ENCODE measurements at regions of chr3 and their contacts with region 1.

Region 1: DNA sequence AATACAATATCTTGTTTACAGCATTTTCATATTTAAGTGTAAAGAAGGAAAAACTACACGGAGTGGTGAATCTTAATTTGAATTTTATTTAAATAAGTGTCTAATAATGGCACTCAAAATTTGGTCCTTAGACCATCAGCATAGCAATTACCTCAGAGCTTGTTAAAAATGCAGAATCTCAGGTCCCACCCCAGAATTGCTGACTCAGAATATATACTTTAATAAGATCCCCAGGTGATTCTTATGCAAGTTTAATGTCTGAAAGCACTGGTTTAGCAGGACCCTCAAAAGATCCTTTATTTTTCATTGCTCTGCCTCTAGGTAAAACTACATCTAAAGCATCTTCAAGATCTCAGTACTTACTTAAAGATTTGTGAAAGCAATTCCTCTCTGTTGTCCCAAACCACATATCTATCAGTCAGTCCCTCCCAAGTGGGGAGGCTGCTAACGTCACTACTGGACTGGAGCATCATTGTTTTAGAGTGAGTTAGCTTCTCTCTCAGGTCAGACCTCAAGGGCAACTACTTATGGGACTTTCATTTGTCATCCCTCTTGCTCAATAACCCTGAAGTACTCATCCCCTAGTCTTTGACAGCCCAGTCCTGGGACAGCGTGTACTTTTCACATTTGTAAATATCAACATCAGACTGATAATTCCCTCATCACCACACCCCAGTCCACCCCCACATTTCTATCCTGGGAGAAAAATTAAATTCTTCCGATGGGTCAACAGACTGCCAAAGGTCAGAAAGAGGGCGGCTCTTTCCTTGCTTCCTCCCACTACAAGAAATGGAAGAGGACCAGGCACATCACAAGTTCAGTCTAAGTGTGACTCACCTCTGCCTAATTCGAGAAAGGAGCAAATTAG is 76.7 kb downstream of the CBLB start:
- DNase-seq: peak; percentile 54 to 88 (median 78)
- ATAC-seq: peak; percentile 90 to 98 (median 94)
- H3K4me3 ChIP-seq: peak overlapping the region in 1 of 12 donors; percentile 30
- H3K27ac ChIP-seq: peak overlapping the region; percentile 56 to 85 (median 81)
- H3K4me1 ChIP-seq: peaks cover 6 to 65% (median 40%) of the 10 kb centered on the region in 12 donors
- H3K27me3 ChIP-seq: no peaks in the 10 kb centered on the region
- CTCF ChIP-seq: no peak
- POLR2A ChIP-seq: peak in 1 of 2 donors; percentile 12

Region 2: DNA sequence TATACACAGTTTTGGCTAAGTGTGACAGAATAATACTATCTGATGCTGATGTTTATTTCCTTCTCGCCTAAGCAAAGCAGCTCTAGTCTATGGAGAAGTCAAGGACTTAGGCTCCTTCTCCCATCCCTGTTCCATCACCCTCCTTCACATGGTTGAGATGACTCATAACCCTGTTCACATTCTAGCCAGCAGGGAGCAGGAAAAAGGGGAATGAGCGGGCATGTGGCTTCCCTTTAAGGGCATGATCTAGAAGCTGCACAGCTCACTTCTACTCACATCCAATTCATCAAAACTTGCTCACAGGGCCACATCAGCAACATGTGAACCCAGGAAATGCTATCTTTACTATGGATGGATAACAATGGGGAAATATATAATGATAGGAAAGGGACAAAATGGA is 35.8 kb after region 1 on chr3:
- intact Hi-C with region 1: loop called in 1 of 10 experiments (anchors 1 kb)
- DNase-seq: peak in 2 of 5 donors; percentile 33 to 35
- ATAC-seq: peak; percentile 12 to 76 (median 72)
- H3K4me3 ChIP-seq: no peak overlapping the region
- H3K27ac ChIP-seq: peak overlapping the region in 9 of 12 donors; percentile 20 to 75 (median 43)
- H3K4me1 ChIP-seq: peaks cover 8 to 92% (median 57%) of the 10 kb centered on the region in 12 donors
- H3K27me3 ChIP-seq: no peaks in the 10 kb centered on the region
- CTCF ChIP-seq: peak in 4 of 12 donors; percentile 8 to 38 (median 26)
- POLR2A ChIP-seq: no peak

Region 3: GRCh38 chr3:105836533-105836932 is 44.4 kb after region 1 on chr3:
- intact Hi-C with region 1: loop called in 1 of 10 experiments (anchors 5 kb)
- DNase-seq: peak in 1 of 5 donors; percentile 30
- ATAC-seq: peak in 3 of 4 donors; percentile 22 to 86 (median 56)
- H3K4me3 ChIP-seq: peak overlapping the region in 4 of 12 donors; percentile 8 to 34 (median 20)
- H3K27ac ChIP-seq: peak overlapping the region; percentile 30 to 73 (median 58)
- H3K4me1 ChIP-seq: peaks cover 0 to 67% (median 41%) of the 10 kb centered on the region in 12 donors
- H3K27me3 ChIP-seq: no peaks in the 10 kb centered on the region
- CTCF ChIP-seq: no peak
- POLR2A ChIP-seq: no peak